ENCODE measurements at regions of chr9 and their contacts with region 1.

Region 1: DNA sequence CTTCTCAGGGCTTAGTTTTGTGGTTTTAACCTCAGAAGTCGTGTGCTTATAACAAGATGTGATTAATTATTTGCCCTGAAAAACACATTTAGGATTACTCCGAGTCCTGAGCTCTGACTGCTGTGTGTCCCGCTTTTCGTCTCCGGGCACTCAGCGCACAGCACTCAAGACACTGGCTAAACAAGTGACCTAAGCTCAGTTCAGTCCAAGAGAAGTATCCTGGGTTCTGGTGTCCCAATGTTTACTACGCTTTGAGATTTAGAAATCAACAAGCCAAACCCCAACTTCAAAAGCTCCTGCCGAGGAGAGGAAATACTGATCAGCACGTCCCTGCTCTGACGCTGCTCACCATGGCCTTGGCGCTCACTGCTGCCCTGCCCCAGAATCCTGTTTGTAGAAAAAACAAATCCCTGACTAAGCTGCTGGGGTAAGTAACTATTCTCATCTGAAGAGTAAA is 53.2 kb downstream of the IPPK start:
- DNase-seq: no peak
- H3K4me3 ChIP-seq: peak overlapping the region; percentile 23 to 42 (median 36)
- H3K27ac ChIP-seq: peak overlapping the region; percentile 82 to 90 (median 88)
- H3K4me1 ChIP-seq: peaks cover 22 to 94% (median 91%) of the 10 kb centered on the region in 4 donors
- H3K27me3 ChIP-seq: no peaks in the 10 kb centered on the region
- CTCF ChIP-seq: no peak
- EP300 ChIP-seq: no peak
- POLR2A ChIP-seq: no peak

Region 2: GRCh38 chr9:92492781-92493401 is 123.8 kb before region 1 on chr9:
- intact Hi-C with region 1: loop called (anchors 5 kb)
- DNase-seq: no peak
- H3K4me3 ChIP-seq: no peak overlapping the region
- H3K27ac ChIP-seq: peak overlapping the region in 3 of 4 donors; percentile 44 to 67 (median 46)
- H3K4me1 ChIP-seq: peaks cover 4 to 81% (median 64%) of the 10 kb centered on the region in 4 donors
- H3K27me3 ChIP-seq: no peaks in the 10 kb centered on the region
- CTCF ChIP-seq: no peak
- EP300 ChIP-seq: no peak
- POLR2A ChIP-seq: no peak

Region 3: DNA sequence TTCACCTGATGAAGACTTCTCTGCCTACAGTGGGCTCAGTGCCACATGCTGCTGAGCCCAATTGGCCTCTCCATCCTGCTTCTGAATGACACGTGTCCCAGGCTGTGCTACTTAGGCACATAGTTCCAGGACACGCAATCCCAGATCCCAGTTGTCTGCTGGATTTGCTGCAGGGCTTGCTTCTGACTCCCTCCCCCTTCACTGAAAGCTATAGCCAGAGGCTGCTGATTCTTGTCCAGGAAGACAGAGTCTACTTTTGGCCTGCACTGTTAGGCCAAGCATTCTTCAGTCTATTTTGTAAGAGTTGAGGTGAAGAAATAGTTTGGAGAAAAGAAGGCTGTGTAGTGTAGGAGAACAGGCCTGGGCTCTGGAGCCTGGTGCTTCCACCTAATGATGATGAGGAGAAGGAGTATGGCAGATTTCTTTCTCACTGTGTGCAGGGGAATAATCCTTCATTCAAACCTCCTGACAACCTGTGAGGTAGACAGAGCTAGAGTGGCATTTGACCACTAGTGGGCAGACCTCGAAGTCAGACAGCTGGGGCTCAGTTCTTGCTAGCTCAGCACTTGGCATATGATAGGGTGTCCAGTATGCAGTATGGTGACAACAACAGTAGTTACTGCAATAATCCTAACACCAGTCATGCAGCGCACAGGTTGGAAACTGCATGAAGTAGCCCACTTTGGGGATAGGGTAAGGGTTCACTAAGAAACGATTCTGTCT is 114.9 kb before region 1 on chr9:
- intact Hi-C with region 1: loop called (anchors 5 kb)
- DNase-seq: no peak
- H3K4me3 ChIP-seq: no peak overlapping the region
- H3K27ac ChIP-seq: peak overlapping the region; percentile 72 to 80 (median 78)
- H3K4me1 ChIP-seq: peaks cover 22 to 76% (median 69%) of the 10 kb centered on the region in 4 donors
- H3K27me3 ChIP-seq: no peaks in the 10 kb centered on the region
- CTCF ChIP-seq: peak in 1 of 3 experiments; percentile 35
- EP300 ChIP-seq: no peak
- POLR2A ChIP-seq: no peak

Region 4: DNA sequence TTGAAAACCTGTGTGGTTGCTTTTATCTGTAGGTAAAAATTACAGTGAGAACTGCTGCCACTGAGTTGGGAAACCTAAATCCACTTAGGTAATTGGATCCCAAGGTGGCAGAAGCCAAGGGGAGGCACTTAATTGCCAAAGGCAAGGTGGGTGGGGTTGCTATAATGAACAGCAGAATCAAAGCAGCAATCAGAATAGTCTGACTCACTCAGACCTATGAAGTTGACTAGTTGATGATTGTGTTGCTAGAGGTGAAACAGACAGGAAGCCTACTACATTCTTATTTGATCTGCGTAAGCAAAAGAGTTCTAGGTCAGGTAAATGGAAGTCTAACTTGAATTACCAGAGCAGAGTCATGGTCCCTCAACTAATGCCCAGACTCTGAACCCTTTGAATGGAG is 165.2 kb after region 1 on chr9:
- intact Hi-C with region 1: no loop called
- DNase-seq: no peak
- H3K4me3 ChIP-seq: no peak overlapping the region
- H3K27ac ChIP-seq: no peak overlapping the region
- H3K4me1 ChIP-seq: no peaks in the 10 kb centered on the region
- H3K27me3 ChIP-seq: no peaks in the 10 kb centered on the region
- CTCF ChIP-seq: no peak
- EP300 ChIP-seq: no peak
- POLR2A ChIP-seq: no peak

Measured in esophagus muscularis mucosa (tissue), 4 donors.